ENCODE measurements at regions of chr5 and their contacts with region 1.

Region 1: DNA sequence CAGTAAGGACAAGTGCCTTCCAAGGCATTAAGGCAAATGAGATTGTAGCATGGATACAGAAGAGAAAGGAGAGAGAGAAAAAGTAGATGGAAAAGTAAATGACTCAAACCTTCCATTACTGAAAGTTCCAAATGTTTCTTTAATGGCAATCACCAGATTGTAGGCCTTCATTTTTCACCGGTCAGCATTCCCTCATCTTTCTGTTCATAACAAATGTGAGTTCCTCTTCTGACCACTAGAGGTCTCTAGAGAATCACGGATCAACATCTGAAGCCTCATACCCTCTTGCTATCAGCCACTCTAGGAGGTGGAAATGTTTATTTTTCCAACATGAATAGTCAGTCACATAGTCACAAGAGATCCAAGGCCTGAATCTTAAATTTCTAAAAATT is 73.6 kb upstream of the RPS23 start:
- DNase-seq: no peak
- ATAC-seq: peak; percentile 64 to 65

Region 2: GRCh38 chr5:82058710-82059109 is 293.0 kb before region 1 on chr5:
- intact Hi-C with region 1: no loop called
- DNase-seq: no peak
- ATAC-seq: no peak

Region 3: GRCh38 chr5:82406205-82406773 is 54.5 kb after region 1 on chr5:
- intact Hi-C with region 1: loop called in 1 of 2 experiments (anchors 10 kb)
- DNase-seq: peak; percentile 52
- ATAC-seq: peak; percentile 27 to 51

Region 4: DNA sequence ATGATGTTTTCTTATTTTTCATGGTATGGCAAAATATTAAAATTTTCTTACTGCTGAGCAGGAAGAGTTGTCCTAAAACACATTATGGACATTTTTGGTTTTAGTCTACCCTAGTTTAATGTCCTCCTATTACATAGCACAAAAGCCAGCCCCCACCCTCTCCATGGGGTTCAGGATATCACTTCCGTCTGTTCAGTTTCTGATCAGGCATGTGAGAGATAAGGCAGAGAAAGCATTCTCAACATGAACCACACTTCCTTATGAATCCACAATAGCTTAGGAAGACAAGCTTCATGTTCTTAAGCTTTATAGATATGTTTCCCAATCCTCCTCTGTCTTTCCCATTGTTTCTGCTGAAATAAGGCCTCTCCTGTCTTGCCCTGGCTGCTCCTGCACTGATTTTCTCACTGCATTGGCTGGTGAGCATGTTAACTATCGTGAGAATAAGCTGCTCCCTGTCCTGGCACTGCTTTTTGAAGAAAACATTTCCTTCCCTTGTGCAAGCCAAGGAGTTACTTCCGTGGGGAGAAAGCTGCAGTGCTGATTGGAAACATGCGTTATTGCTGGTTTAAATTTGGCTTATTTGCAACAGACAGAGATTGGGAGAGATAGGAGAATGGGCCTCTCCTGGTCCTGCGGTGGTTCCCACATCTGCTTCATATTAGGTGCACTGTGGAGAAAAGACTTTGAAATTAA is 186.7 kb after region 1 on chr5:
- intact Hi-C with region 1: no loop called
- DNase-seq: no peak
- ATAC-seq: peak; percentile 41 to 54

Region 5: DNA sequence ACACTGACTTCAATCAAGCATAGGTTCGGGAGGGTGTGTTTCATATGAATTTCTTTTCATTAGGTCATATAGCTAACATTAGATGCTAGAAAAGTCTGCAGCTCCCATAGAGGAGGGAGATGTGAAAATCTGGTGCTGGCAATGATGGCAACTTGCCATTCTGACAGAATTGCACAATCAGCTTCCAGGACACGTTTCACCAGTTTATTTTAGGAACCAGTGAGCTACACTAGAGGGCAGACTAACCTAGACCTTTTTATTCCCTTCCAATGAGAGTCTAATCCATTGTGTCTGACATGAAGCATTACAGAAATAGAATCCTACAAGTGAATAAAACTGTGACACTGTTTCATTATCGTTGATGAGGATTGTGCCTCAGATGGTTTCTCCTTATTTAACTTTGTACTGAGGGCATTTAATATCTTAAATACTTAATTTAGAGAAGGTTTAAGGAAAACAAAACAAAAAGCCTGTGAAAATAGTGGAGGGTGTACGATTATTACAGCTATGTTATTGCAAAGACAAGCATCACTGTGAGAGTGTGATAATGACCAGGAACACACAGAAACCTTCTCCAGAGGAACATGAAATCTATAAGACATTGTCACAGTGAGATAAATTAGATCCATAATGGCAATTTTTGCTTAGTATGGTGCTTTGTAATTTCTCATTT is 289.7 kb after region 1 on chr5:
- intact Hi-C with region 1: loop called in 1 of 2 experiments (anchors 5 kb)
- DNase-seq: peak; percentile 65
- ATAC-seq: peak; percentile 95 to 96

Region 6: DNA sequence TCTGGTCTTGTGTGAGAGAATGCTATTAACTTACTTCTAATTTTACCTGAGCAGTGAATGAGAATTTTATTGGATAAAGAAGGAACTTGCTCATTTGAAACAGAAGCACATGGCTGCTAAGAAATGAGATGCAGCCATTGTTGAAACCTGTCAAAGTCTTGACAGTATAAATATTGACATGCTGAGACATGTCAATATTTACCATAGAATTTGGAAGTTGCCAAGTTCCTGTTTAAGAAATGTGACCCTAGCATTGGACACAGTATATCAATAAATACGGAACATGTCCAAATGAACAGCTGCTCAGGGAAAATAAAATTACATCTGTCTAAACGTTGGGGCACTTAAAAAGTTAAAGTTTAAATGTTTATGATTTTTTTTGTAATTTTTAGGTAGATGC is 733.4 kb after region 1 on chr5:
- intact Hi-C with region 1: loop called in 1 of 2 experiments (anchors 10 kb)
- DNase-seq: no peak
- ATAC-seq: no peak

Region 7: GRCh38 chr5:83430130-83431010 is 1078.6 kb after region 1 on chr5:
- intact Hi-C with region 1: loop called in 1 of 2 experiments (anchors 10 kb)
- DNase-seq: peak; percentile 68
- ATAC-seq: peak; percentile 79 to 88

Region 8: DNA sequence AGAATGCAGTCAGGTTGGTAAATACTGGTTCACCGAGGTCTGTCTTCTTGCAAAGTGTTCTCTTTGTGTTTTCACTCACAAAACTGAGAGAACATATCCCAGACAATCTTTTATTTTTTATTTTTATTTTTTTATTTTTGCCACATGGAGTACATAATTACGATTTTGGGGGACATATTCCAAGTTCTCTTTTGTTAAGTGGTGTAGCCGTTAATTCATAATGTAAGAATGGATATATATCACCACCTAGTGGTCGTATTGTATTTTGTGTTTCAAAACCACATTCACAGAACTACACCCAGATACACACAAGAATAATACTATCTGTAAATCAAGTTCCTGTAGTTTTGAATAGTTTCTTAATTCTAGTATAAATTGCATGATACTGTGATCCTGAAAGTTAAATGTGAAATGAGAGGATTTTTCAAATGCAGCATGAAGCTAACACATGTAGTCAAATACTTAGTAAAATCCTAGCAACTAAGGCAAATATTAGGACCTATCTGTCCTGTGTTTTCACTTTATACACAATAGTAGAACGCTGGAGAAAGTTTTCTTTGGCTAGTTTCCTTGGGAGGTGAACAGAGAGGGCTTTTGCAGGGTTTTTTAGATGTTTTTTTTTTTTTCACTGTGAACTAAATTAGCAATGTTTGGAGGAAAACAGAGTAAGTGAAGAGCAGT is 1212.5 kb after region 1 on chr5:
- intact Hi-C with region 1: loop called in 1 of 2 experiments (anchors 2 kb)
- DNase-seq: no peak
- ATAC-seq: peak; percentile 39 to 66